ENCODE measurements at regions of chr16 and their contacts with region 1.

Region 1: GRCh38 chr16:7268182-7268581 is 64.5 kb upstream of the RBFOX1 start:
- DNase-seq: peak; percentile 46
- H3K4me3 ChIP-seq: no peak overlapping the region
- H3K27ac ChIP-seq: no peak overlapping the region
- H3K4me1 ChIP-seq: no peaks in the 10 kb centered on the region
- H3K27me3 ChIP-seq: no peaks in the 10 kb centered on the region
- CTCF ChIP-seq: peak; percentile 41
- EP300 ChIP-seq: no peak
- RAD21 ChIP-seq: peak; percentile 65

Region 2: GRCh38 chr16:7278636-7279265 is 10.6 kb after region 1 on chr16:
- CTCF ChIA-PET with region 1: interaction called, 13 read pairs
- POLR2A ChIA-PET with region 1: no interaction called
- DNase-seq: no peak
- H3K4me3 ChIP-seq: no peak overlapping the region
- H3K27ac ChIP-seq: no peak overlapping the region
- H3K4me1 ChIP-seq: no peaks in the 10 kb centered on the region
- H3K27me3 ChIP-seq: no peaks in the 10 kb centered on the region
- CTCF ChIP-seq: no peak
- EP300 ChIP-seq: no peak
- RAD21 ChIP-seq: no peak

Measured in SK-N-SH (cell line).